ENCODE measurements at regions of chr3 and their contacts with region 1.

Region 1: GRCh38 chr3:88263417-88264100 is 113.8 kb downstream of the C3orf38 start:
- DNase-seq: no peak
- H3K4me3 Mint-ChIP-seq: no peak overlapping the region
- H3K27ac Mint-ChIP-seq: no peak overlapping the region
- H3K4me1 Mint-ChIP-seq: no peaks in the 10 kb centered on the region
- H3K27me3 Mint-ChIP-seq: no peaks in the 10 kb centered on the region

Region 2: DNA sequence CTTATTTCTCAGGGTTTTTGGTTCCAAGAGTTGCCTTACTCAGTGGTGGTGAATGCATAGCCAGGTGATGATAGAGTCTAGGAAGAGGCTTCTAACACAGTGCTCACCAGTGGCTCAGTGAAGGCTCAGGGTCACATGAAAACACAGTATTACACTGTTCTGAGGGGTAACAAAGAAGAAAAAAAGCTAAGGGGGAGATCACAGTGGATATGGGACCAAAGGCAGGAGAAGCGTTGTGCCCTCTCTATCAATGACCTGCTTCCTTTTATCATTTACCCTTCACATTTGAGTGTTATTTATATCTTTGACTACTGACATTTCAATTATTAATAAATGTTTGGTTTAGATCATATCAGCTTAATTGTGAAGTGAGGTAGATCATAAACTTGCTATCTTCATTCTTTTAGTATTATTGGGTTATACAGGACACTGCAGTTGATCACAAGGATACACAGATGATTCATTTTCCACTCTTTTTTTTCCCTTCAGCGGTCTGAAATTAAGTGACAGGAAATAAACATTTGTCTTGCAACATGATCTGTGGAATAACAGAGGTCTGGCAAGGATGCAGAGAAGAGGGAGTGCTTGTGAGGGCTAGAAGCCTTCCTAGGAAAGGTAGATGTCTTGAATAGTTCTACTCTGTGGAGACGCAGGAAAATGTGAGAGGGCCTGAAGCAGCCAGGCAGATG is 57.9 kb after region 1 on chr3:
- CTCF ChIA-PET with region 1: no interaction called
- intact Hi-C with region 1: loop called (anchors 10 kb)
- DNase-seq: no peak
- H3K4me3 Mint-ChIP-seq: no peak overlapping the region
- H3K27ac Mint-ChIP-seq: no peak overlapping the region
- H3K4me1 Mint-ChIP-seq: no peaks in the 10 kb centered on the region
- H3K27me3 Mint-ChIP-seq: no peaks in the 10 kb centered on the region

Measured in activated naive CD4-positive, alpha-beta T cell treated with anti-CD3 and anti-CD28 coated beads for 36 hours (primary cell).